ENCODE measurements at regions of chr16 and their contacts with region 1.

Region 1: DNA sequence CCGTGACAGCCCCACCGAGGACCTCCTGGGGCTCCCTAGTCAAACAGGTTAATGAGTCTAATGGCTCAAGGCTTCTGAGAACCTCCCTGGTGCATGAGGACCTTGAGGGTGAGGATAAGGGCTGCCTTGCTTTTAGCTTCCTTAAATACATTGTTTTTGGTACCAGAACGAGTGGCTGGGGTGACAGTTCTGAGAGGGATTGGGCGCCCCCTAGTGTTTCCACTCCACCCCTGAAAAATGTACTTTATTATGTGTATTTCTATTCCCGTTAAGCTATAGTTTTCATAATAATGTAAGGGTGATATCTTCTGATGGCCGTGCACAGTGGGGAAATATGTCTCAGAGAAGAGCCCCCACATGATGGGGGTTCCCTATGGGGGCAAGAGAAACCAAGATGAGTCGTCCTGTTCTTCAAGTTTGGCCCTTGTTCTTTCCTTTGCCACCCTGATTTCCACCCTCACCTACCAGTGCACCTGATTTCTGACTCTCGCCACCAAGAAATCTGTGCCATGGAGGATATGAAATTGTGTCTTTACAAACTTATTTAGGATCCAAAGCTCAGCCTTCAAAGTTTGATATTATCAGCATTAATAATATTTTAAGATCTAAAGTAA is 14.5 kb upstream of the VWA3A start:
- DNase-seq: peak; percentile 85
- ATAC-seq: peak; percentile 81
- H3K4me3 Mint-ChIP-seq: no peak overlapping the region
- H3K27ac Mint-ChIP-seq: no peak overlapping the region
- H3K4me1 Mint-ChIP-seq: peaks cover 9% of the 10 kb centered on the region
- H3K27me3 Mint-ChIP-seq: no peaks in the 10 kb centered on the region

Region 2: GRCh38 chr16:21937336-21937829 is 140.4 kb before region 1 on chr16:
- CTCF ChIA-PET with region 1: no interaction called
- POLR2A ChIA-PET with region 1: no interaction called
- intact Hi-C with region 1: no loop called
- DNase-seq: no peak
- ATAC-seq: no peak
- H3K4me3 Mint-ChIP-seq: peak overlapping the region; percentile 1
- H3K27ac Mint-ChIP-seq: peak overlapping the region; percentile 63
- H3K4me1 Mint-ChIP-seq: peaks cover 27% of the 10 kb centered on the region
- H3K27me3 Mint-ChIP-seq: peaks cover 2% of the 10 kb centered on the region

Region 3: DNA sequence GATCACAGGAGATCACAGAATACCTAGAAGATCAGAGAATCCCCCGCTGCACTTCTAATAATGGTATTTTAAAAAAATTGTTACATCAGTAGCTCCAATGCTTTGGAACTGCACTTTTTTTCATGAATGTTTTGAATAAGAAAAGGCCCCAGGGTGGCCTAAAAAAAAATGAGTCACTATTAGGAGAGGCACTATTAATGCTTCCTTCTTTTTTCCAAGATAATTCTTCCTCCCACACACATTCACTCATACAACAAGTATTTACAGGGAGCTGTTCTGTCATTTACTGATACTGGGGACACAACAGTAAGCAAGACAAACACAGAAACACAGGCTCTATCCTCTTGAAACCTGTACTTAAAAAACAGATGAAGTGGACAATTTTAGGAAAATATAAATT is 76.2 kb before region 1 on chr16:
- CTCF ChIA-PET with region 1: interaction called, 326 read pairs
- POLR2A ChIA-PET with region 1: interaction called, 3 read pairs
- intact Hi-C with region 1: loop called (anchors 1 kb)
- DNase-seq: no peak
- ATAC-seq: no peak
- H3K4me3 Mint-ChIP-seq: no peak overlapping the region
- H3K27ac Mint-ChIP-seq: no peak overlapping the region
- H3K4me1 Mint-ChIP-seq: peaks cover 7% of the 10 kb centered on the region
- H3K27me3 Mint-ChIP-seq: no peaks in the 10 kb centered on the region

Region 4: GRCh38 chr16:22014271-22014873 is 63.4 kb before region 1 on chr16:
- CTCF ChIA-PET with region 1: interaction called, 326 read pairs
- POLR2A ChIA-PET with region 1: no interaction called
- intact Hi-C with region 1: no loop called
- DNase-seq: no peak
- ATAC-seq: no peak
- H3K4me3 Mint-ChIP-seq: no peak overlapping the region
- H3K27ac Mint-ChIP-seq: no peak overlapping the region
- H3K4me1 Mint-ChIP-seq: peaks cover 77% of the 10 kb centered on the region
- H3K27me3 Mint-ChIP-seq: no peaks in the 10 kb centered on the region

Region 5: GRCh38 chr16:22055878-22056277 is 21.9 kb before region 1 on chr16:
- CTCF ChIA-PET with region 1: interaction called, 23 read pairs
- POLR2A ChIA-PET with region 1: no interaction called
- intact Hi-C with region 1: no loop called
- DNase-seq: no peak
- ATAC-seq: no peak
- H3K4me3 Mint-ChIP-seq: no peak overlapping the region
- H3K27ac Mint-ChIP-seq: no peak overlapping the region
- H3K4me1 Mint-ChIP-seq: peaks cover 47% of the 10 kb centered on the region
- H3K27me3 Mint-ChIP-seq: no peaks in the 10 kb centered on the region

Region 6: DNA sequence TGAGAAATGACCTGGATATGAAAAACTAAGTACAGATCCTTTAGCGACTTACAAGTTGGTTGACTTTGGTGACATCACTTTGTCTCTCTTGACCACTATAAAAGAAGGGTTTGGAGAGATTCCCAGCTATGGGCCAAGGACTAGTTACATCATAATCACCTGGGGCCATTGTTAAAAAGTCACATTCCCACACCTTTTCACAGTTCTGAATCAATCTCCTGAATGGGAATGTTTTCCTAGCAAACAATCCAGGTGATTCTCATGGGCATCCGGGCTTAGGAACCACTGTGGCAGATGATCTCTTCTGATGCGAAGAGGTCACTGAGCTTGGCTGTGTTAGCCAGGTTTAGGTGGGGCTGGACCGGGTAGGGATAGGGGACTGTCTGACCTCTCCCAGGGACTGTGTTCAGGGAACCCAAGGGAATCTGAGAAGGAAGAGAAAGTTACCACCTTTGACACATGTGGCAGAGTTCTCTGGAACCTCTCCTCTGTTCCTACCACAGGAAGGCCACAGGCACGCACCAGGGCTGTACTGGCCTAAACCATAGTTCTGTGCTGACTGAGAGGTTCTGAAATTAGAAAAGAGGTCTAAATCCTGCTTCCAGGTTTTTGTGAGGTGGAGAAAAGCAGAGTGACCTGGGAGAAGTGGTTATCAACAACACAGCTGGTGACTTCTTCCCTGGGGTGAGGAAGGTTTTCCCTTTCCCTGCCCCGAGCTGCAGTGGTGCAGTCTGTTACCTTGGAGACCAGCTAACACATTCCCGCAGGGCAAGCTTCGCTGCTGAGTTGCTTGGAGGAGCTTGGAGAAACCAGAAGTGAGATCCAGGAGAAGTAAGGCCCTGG is 14.2 kb after region 1 on chr16 and contains the start of gene VWA3A:
- CTCF ChIA-PET with region 1: interaction called, 39 read pairs
- POLR2A ChIA-PET with region 1: no interaction called
- intact Hi-C with region 1: no loop called
- DNase-seq: no peak
- ATAC-seq: no peak
- H3K4me3 Mint-ChIP-seq: no peak within 1 kb of the TSS
- H3K27ac Mint-ChIP-seq: no peak within 1 kb of the TSS
- H3K4me1 Mint-ChIP-seq: no peaks in the 10 kb centered on the region
- H3K27me3 Mint-ChIP-seq: peaks cover 3% of the 10 kb centered on the region
- total RNA-seq, gene VWA3A: 0.18 TPM in 1 of 2 experiments, not detected in the other

Region 7: DNA sequence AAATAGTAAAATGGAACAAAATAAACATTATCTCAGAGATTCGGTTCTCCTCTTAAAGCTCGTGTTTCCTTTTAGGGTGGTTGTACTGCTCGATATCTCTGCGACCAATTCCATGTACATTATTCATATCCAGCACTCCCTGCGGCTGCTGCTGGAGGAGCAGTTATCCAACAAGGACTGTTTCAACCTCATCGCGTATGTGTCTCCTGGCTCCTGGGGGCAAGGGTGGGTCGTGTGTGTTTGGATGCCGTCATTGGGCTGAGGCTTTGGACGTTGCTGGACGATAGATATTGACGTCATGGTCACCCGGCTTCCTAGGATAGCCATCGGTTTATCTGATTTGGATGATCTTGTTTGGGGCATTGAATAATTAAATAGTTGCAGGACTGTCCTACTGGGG is 48.3 kb after region 1 on chr16:
- CTCF ChIA-PET with region 1: no interaction called
- POLR2A ChIA-PET with region 1: no interaction called
- intact Hi-C with region 1: no loop called
- DNase-seq: no peak
- ATAC-seq: no peak
- H3K4me3 Mint-ChIP-seq: no peak overlapping the region
- H3K27ac Mint-ChIP-seq: no peak overlapping the region
- H3K4me1 Mint-ChIP-seq: no peaks in the 10 kb centered on the region
- H3K27me3 Mint-ChIP-seq: peaks cover 17% of the 10 kb centered on the region

Measured in activated CD4-positive, alpha-beta T cell treated with anti-CD3 and anti-CD28 coated beads for 36 hours (primary cell).